ENCODE measurements at regions of chr1 and their contacts with region 1.

Region 1: GRCh38 chr1:172338295-172338735 is 82.2 kb upstream of the C1orf105 start:
- DNase-seq: no peak
- ATAC-seq: no peak

Region 2: DNA sequence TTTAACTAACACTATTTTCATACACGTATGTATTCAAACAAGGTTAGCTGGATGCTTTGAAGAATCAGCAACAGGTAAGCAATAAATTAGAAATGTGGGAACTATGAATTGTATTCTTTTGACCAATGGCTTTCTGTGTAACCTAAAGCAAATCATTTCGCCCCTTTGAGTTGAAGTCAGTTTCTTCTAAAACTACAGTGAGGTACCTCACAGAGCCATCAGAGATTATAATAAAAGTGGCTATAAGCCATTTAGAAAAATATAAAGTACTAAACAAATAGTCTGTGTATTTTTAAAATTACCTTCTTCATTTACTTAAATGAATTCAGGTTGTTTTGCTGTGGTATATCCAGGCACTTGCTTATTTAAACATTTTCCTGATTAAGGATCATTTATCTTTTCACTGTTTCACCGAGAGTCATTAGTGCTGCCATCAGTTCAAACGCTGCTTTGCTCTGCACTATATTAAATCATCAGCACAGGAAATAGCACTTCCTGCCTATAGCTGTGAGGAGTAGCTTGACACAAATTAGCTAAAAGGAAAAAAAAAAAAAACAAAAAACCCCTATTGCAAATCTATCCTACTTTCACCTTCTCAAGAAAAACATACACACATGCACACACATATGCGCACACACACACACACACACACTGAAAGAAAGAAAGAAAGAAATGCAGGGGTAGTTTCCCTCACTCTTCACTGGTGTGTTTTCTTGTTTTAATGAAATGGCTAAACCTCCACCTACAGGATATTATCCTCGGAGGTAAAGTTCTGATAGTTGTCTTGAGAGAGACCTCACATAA is 42.3 kb after region 1 on chr1:
- intact Hi-C with region 1: loop called in 1 of 2 experiments (anchors 10 kb)
- DNase-seq: no peak
- ATAC-seq: peak in 1 of 2 donors; percentile 50

Measured in left cardiac atrium (tissue), 4 donors.